HEK293 (cell line): ENCODE measurements at regions of chr10 and their contacts with region 1.

Region 1: DNA sequence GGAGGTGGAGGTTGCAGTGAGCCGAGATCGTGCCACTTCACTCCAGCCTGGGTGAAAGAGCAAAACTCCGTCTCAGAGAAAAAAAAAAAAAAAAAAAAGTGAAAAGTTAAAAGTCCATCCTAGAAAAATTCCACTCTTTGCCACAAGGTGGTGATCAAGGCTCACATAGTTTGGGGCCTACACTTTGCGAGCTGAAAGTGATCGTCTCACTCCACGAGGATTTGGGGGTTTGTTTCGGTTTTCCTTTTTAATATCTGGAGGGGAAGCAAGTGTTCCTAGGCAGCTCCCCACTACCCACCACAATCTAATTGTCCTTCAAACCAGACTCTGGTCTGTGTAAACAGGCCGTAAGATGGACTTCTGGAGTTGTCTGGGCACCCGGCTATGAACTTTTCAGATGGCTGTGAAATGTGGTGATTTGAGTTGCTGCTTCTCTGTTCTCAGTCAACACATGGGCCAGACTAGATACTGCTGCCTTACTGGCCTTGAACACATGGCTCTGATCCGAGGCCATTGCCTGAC is 27.1 kb downstream of the PRLHR start:
- H3K4me3 ChIP-seq: no peak overlapping the region
- H3K27ac ChIP-seq: no peak overlapping the region
- H3K4me1 ChIP-seq: peaks cover 2% of the 10 kb centered on the region; the same call in 1 of the 2 replicates
- CTCF ChIP-seq: peak; percentile 76

Region 2: DNA sequence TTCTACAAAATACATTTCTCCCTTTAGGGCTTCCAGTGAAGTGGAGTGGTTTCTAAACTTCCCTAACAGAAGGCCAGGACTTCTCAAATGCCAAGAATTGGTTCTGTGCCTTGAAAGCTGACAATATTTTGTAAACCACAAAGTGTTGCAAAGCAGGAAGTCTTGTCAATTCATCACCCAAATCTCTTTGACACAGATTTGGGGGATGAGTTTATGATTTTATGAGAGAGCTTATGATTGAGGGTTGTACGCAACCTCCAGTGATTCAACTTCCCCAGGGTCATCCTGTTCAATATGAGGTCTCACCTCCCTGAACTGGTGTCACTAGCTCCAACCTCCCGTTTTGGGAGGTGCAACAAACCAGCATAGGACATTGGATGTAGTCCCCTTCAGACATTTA is 56.7 kb before region 1 on chr10:
- CTCF ChIA-PET with region 1: no interaction called
- POLR2A ChIA-PET with region 1: no interaction called
- H3K4me3 ChIP-seq: no peak overlapping the region
- H3K27ac ChIP-seq: no peak overlapping the region
- H3K4me1 ChIP-seq: no peaks in the 10 kb centered on the region
- CTCF ChIP-seq: no peak

Region 3: GRCh38 chr10:118581361-118581886 is 13.0 kb after region 1 on chr10:
- CTCF ChIA-PET with region 1: interaction called, 28 read pairs
- POLR2A ChIA-PET with region 1: no interaction called
- H3K4me3 ChIP-seq: no peak overlapping the region
- H3K27ac ChIP-seq: no peak overlapping the region
- H3K4me1 ChIP-seq: no peaks in the 10 kb centered on the region
- CTCF ChIP-seq: no peak

Region 4: GRCh38 chr10:118720685-118721538 is 152.5 kb after region 1 on chr10:
- CTCF ChIA-PET with region 1: interaction called, 74 read pairs
- POLR2A ChIA-PET with region 1: interaction called, 3 read pairs
- H3K4me3 ChIP-seq: no peak overlapping the region
- H3K27ac ChIP-seq: no peak overlapping the region
- H3K4me1 ChIP-seq: peaks cover 5% of the 10 kb centered on the region; the same call in 1 of the 2 replicates
- CTCF ChIP-seq: peak; percentile 47; the same call in 1 of the 2 replicates

Region 5: GRCh38 chr10:118725886-118726500 is 157.6 kb after region 1 on chr10:
- CTCF ChIA-PET with region 1: interaction called, 74 read pairs
- POLR2A ChIA-PET with region 1: no interaction called
- H3K4me3 ChIP-seq: no peak overlapping the region
- H3K27ac ChIP-seq: no peak overlapping the region
- H3K4me1 ChIP-seq: peaks cover 29% of the 10 kb centered on the region
- CTCF ChIP-seq: no peak

Region 6: GRCh38 chr10:118800920-118801319 is 232.5 kb after region 1 on chr10:
- CTCF ChIA-PET with region 1: interaction called, 26 read pairs
- POLR2A ChIA-PET with region 1: no interaction called
- H3K4me3 ChIP-seq: no peak overlapping the region
- H3K27ac ChIP-seq: no peak overlapping the region
- H3K4me1 ChIP-seq: no peaks in the 10 kb centered on the region
- CTCF ChIP-seq: peak; percentile 50; the same call in 1 of the 2 replicates

Region 7: GRCh38 chr10:118850418-118851061 is 282.2 kb after region 1 on chr10:
- CTCF ChIA-PET with region 1: interaction called, 10 read pairs
- POLR2A ChIA-PET with region 1: no interaction called
- H3K4me3 ChIP-seq: no peak overlapping the region
- H3K27ac ChIP-seq: no peak overlapping the region
- H3K4me1 ChIP-seq: no peaks in the 10 kb centered on the region
- CTCF ChIP-seq: 0 out of 2 replicates have a peak, but pooled peaks have one; percentile 8